ENCODE measurements at regions of chr22 and their contacts with region 1.

Region 1: GRCh38 chr22:19991645-19992451 is 24.8 kb downstream of the ARVCF start:
- DNase-seq: peak in 1 of 4 experiments; percentile 27
- ATAC-seq: no peak
- H3K4me3 ChIP-seq: no peak overlapping the region
- H3K27ac ChIP-seq: no peak overlapping the region
- H3K4me1 ChIP-seq: peaks cover 31 to 70% of the 10 kb centered on the region in 2 experiments
- H3K27me3 ChIP-seq: no peaks in the 10 kb centered on the region
- CTCF ChIP-seq: peak in 1 of 3 experiments; percentile 18; a peak in 1 of 6 replicates
- EP300 ChIP-seq: no peak
- POLR2A ChIP-seq: no peak
- RAD21 ChIP-seq: no peak

Region 2: GRCh38 chr22:19896665-19897355 is 95.0 kb before region 1 on chr22:
- CTCF ChIA-PET with region 1: no interaction called
- POLR2A ChIA-PET with region 1: no interaction called
- in situ Hi-C with region 1: no loop called
- intact Hi-C with region 1: no loop called
- DNase-seq: peak in 3 of 4 experiments; percentile 54 to 84 (median 76)
- ATAC-seq: peak; percentile 42
- H3K4me3 ChIP-seq: no peak overlapping the region
- H3K27ac ChIP-seq: no peak overlapping the region
- H3K4me1 ChIP-seq: peaks cover 12 to 51% of the 10 kb centered on the region in 2 experiments
- H3K27me3 ChIP-seq: no peaks in the 10 kb centered on the region
- CTCF ChIP-seq: 0 out of 6 replicates have a peak, but pooled peaks of 1 of the 3 experiments have one; percentile 16
- EP300 ChIP-seq: no peak
- POLR2A ChIP-seq: no peak
- RAD21 ChIP-seq: no peak

Region 3: DNA sequence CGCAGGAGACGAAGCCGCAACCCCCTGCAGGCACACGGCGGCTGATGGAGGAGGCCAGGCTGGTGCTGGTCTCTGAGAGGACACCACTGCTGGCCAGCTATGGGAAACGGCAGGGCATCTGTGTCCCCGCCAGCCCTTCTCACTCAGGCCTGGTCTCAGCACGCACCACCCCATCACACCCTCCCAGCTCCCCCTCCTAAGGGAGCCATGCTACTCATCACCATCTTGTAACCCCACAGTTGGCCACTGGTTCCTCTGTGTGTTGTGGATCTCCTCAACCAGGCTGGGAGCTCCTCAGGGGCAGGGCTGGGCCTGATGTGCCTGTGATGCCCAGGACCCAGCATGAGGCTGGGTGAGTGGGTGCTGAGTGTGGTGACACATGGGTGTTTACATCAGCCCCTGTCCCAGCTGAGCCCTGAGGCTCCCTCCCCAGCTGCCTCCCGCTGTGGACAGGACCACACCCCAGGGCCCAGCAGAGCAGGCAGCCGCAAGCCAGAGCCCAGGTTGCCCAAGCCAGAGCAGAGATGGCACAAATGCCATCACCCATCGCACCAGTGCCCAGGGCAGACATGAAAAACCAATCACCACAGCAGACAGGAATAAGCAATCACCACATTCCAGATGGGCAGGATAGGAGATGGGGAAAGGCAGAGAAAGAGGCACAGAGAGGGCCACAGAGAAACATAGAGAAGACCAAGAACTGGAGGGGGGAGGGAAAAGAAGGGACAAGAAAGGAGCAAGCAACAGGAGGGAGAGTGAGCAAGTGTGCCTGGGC is 16.6 kb after region 1 on chr22:
- CTCF ChIA-PET with region 1: no interaction called
- POLR2A ChIA-PET with region 1: interaction called, 24 read pairs
- in situ Hi-C with region 1: no loop called
- intact Hi-C with region 1: no loop called
- DNase-seq: peak in 1 of 4 experiments; percentile 54
- ATAC-seq: peak; percentile 14
- H3K4me3 ChIP-seq: no peak overlapping the region
- H3K27ac ChIP-seq: no peak overlapping the region
- H3K4me1 ChIP-seq: peaks cover 57 to 64% of the 10 kb centered on the region in 2 experiments
- H3K27me3 ChIP-seq: no peaks in the 10 kb centered on the region
- CTCF ChIP-seq: no peak
- EP300 ChIP-seq: no peak
- POLR2A ChIP-seq: no peak
- RAD21 ChIP-seq: no peak

Measured in K562 (cell line).